AG04449 (cell line): ENCODE measurements at regions of chr15 and their contacts with region 1.

Region 1: GRCh38 chr15:78859971-78860732 is 12.5 kb upstream of the MORF4L1 start:
- DNase-seq: no peak
- H3K4me3 ChIP-seq: peak overlapping the region; percentile 50
- CTCF ChIP-seq: peak; percentile 33

Region 2: DNA sequence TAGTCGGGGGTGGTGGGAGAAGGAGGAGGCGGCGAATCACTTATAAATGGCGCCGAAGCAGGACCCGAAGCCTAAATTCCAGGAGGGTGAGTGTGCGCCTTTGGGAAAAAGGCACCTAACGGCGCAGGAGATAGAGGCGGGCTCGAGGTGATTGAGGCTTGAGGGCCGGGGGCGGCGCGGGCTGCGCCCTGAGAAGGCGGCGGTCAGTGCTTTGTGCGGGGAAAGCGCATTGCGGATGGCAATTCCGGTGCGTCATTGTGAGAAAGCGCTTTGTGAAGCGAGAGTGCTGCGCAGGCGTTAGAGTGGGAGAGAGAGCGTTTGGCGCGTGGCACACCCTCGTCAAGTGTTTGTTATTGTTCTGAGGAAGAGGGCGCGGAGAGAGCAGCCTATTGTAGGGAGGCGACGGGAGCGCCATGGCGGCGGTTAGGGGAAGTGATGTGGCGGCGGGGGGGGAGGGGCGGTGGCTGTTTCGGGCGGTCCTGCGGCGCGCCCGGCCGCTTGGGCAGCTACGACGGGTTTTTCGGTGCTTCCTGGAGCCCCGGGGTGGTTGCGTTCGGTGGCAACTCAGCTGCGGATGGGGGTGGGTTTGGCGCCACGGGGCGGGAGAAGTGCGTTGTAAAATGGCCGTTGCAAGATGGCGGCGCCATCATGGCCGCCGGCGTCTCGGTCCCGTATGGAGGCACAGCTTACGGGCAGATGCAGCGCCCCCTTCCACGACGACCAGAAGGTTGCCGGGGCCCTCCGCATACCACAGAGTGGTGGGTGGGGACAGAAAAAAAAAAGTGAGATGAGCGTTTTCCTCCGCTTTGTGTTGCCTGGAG is 13.0 kb after region 1 on chr15:
- CTCF ChIA-PET with region 1: interaction called, 11 read pairs
- POLR2A ChIA-PET with region 1: interaction called, 21 read pairs
- DNase-seq: no peak
- H3K4me3 ChIP-seq: peak overlapping the region; percentile 97
- CTCF ChIP-seq: peak; percentile 80